ENCODE measurements at regions of chr20 and their contacts with region 1.

Region 1: DNA sequence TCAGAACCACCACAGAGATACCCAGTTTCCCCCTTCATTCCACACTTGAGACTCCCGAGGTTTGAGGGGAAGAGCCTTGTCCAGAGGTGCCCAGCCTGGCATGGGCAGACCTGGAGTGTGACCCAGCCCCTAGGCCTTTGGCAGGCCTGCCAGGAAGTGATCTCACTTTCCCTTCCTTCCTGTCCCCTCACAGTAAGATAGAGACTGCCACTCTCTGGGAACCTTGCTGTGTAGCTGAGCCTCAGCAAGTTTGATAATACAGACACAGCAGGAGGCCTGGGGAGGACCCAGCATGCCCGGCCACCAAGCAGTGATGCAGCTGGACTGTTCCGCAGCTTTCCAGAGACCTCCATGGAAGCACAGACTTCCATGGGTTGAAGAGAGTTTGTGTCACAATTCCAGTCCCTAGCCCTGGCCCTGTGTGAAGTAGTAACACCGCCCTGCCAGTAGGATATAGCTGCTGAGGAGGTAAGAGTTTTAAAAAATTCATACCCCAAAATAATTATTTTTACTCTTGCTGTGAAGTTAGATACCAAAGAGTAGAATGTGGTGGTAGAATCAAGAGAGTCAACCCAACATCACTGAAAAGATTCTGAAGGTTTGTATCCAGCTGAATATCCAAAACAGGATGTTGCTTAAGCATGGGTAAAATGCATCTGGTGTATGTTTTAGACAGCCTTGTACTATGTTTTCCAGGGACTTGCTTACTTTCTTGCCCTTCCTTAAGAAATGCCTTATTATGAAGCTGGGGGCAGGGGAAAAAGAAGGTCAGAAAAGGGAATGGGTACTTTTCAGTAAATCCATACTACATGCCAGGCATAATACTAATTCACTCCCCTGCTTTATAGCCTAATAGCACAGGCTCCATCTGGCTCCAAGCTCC is 16.3 kb downstream of the PKIG start:
- DNase-seq: peak; percentile 75 to 83 (median 77)
- ATAC-seq: peak; percentile 58 to 75 (median 64)
- H3K4me3 ChIP-seq: peak overlapping the region in 11 of 12 donors; percentile 14 to 41 (median 33)
- H3K27ac ChIP-seq: peak overlapping the region; percentile 60 to 97 (median 92)
- H3K4me1 ChIP-seq: peaks cover 53 to 100% (median 95%) of the 10 kb centered on the region in 12 donors
- H3K27me3 ChIP-seq: no peaks in the 10 kb centered on the region
- CTCF ChIP-seq: peak in 4 of 12 donors; percentile 9 to 28 (median 16)
- POLR2A ChIP-seq: peak in 1 of 2 donors; percentile 27

Region 2: GRCh38 chr20:44532259-44532980 is 66.2 kb before region 1 on chr20:
- intact Hi-C with region 1: loop called in 4 of 10 experiments (anchors 5 kb)
- DNase-seq: no peak
- ATAC-seq: peak in 2 of 4 donors; percentile 8 to 37
- H3K4me3 ChIP-seq: peak overlapping the region; percentile 45 to 99 (median 86)
- H3K27ac ChIP-seq: peak overlapping the region in 11 of 12 donors; percentile 17 to 87 (median 76)
- H3K4me1 ChIP-seq: peaks cover 0 to 32% (median 10%) of the 10 kb centered on the region in 12 donors
- H3K27me3 ChIP-seq: peaks cover 0 to 10% (median 0%) of the 10 kb centered on the region in 9 donors
- CTCF ChIP-seq: no peak
- POLR2A ChIP-seq: no peak

Region 3: DNA sequence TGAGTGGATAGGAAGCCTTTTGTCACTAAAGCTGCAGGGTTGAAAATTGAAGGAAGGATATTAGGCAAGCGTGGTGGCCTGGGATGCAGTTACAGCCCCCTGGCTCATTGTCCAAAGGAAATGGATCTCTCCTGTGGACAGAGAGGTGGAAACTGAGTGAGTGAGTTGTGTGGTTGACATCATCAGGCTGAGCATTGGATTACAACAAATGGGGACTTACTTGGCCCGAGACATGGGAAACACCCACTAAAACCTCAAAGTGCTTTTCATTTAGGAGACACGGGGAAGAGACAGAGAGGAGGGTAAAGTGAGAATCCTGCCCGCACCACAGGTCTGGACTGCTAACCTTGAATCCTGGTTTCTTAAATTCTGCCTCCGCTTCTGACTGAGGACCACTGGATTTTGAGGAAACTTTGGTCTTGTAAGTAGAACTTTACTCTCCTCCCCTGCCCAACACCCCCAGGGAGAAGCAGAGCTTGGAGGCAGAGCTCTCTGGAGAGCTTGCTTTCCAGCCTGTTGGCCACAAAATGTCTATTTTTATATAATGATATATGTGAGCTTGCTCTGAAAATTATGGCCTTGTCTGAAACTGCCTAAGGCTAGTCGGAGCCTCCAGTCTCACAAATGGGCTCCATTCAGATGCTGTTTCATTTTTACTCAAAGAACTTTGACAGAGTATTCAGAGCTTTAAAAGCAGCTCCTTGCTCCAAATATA is 16.2 kb before region 1 on chr20 and contains the start of gene PKIG:
- intact Hi-C with region 1: loop called in 4 of 10 experiments (anchors 2 kb)
- DNase-seq: peak in 4 of 5 donors; percentile 57 to 81 (median 71)
- ATAC-seq: peak; percentile 81 to 93 (median 89)
- H3K4me3 ChIP-seq: peak within 1 kb of the TSS; percentile 40 to 72 (median 64)
- H3K27ac ChIP-seq: peak within 1 kb of the TSS; percentile 82 to 96 (median 92)
- H3K4me1 ChIP-seq: peaks cover 5 to 74% (median 60%) of the 10 kb centered on the region in 12 donors
- H3K27me3 ChIP-seq: no peaks in the 10 kb centered on the region
- CTCF ChIP-seq: no peak
- POLR2A ChIP-seq: peak in 1 of 2 donors; percentile 87
- total RNA-seq, gene PKIG: 156 to 286 (median 200) TPM